Activated T-helper 1 cell treated with anti-CD3 and anti-CD28 coated beads, Interleukin-12 subunit alpha, Interleukin-12 subunit beta, Interleukin-2, Interleukin-4 antibody, amounts not matched to agents 30 ng/mL and 10 ng/mL and 1 ng/mL, durations not matched to agents 14 hours and 24 hours and 36 hours (primary cell): ENCODE measurements at regions of chr10 and their contacts with region 1.

Region 1: DNA sequence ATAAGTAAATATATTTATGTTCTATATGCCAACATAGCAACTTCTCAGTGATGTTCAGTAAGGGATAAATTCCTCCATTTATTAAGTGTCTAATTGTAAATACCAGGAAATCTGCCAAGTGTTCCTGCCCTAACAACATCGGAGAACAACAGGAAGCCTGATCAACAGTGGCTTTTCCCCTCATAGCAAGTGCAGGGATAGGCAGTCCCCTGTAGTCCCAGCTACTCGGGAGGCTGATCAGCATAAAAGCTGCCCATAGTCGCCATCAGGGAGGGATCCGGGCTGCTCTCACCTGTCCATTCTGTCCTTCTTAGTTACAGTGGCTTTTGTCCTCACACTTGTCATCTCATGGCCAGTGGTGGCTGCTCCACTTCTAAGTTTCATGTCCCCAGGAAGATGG is 141.3 kb downstream of the IDE start:
- DNase-seq: no peak
- H3K4me3 Mint-ChIP-seq: no peak overlapping the region
- H3K27ac Mint-ChIP-seq: no peak overlapping the region
- H3K4me1 Mint-ChIP-seq: no peaks in the 10 kb centered on the region
- H3K27me3 Mint-ChIP-seq: peaks cover 2% of the 10 kb centered on the region

Region 2: GRCh38 chr10:91758303-91759146 is 674.1 kb before region 1 on chr10:
- intact Hi-C with region 1: loop called (anchors 1 kb)
- DNase-seq: no peak
- H3K4me3 Mint-ChIP-seq: no peak overlapping the region
- H3K27ac Mint-ChIP-seq: no peak overlapping the region
- H3K4me1 Mint-ChIP-seq: no peaks in the 10 kb centered on the region
- H3K27me3 Mint-ChIP-seq: peaks cover 37% of the 10 kb centered on the region

Region 3: GRCh38 chr10:91901784-91902677 is 530.6 kb before region 1 on chr10:
- intact Hi-C with region 1: no loop called
- DNase-seq: no peak
- H3K4me3 Mint-ChIP-seq: peak overlapping the region; percentile 45
- H3K27ac Mint-ChIP-seq: peak overlapping the region; percentile 90
- H3K4me1 Mint-ChIP-seq: peaks cover 28% of the 10 kb centered on the region
- H3K27me3 Mint-ChIP-seq: peaks cover 4% of the 10 kb centered on the region

Region 4: DNA sequence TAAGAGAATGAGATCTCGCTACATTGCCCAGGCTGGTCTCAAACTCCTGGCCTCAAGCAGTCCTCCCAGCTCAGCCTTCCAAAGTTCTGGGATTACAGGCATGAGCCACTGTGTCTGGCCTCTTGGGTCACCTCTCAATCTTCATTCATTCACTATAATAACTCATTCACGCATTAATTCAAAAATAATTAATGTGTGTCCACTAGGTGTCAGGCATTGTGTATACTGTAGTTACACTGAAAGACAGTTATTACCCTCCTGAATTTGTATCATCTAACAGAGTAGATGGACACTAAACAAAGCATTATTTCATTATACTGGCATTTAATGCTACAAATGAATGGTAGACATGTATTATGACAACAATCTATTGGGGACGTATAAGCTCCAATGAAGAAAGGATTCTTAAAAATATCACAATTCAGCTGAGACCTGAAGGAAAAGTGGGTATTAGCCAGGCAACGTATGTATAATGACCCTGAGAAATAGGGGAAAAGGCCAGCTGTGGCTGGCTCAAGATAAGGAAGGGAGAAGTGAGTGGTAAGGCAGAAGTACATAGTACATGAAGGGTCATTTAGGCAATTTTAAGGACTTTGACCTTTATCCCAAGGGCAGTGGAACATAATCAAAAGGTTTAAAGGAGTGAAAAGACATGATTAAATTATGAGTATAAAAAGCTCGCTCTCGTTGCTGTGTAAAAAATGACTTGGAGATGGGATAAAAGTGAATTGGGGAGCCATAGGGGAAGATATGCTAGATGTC is 358.3 kb before region 1 on chr10:
- intact Hi-C with region 1: loop called (anchors 5 kb)
- DNase-seq: no peak
- H3K4me3 Mint-ChIP-seq: no peak overlapping the region
- H3K27ac Mint-ChIP-seq: no peak overlapping the region
- H3K4me1 Mint-ChIP-seq: no peaks in the 10 kb centered on the region
- H3K27me3 Mint-ChIP-seq: no peaks in the 10 kb centered on the region

Region 5: DNA sequence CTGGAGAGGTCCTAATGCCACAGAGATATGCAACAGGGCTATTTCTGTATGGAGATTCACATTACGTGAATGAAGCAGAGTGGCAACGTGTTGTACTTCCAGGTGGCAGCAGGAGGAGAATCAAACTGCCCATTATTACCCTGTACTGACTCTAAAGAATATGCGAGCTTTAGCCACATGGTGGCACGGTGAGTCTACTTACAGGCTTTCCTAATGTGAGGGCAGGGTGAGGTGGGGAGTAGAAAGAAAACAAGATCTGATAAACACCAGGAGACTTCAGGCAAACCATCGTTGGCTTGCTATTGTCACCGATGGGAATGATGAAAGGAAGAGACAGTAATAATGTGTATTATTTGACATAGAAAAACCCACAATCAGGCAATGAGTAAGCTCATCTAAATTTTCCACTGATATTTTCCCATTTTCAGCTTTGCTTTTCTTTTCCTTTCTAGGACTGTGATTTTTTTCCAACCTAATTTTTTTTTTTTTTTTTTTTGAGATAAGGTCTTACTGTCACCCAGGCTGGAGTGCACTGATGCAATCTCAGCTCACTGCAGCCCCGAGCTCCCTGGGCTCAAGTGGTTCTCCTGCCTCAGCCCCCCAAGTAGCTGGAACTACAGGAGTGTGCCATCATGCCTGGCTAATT is 344.7 kb before region 1 on chr10:
- intact Hi-C with region 1: loop called (anchors 1 kb)
- DNase-seq: peak; percentile 43
- H3K4me3 Mint-ChIP-seq: no peak overlapping the region
- H3K27ac Mint-ChIP-seq: no peak overlapping the region
- H3K4me1 Mint-ChIP-seq: peaks cover 8% of the 10 kb centered on the region
- H3K27me3 Mint-ChIP-seq: no peaks in the 10 kb centered on the region

Region 6: DNA sequence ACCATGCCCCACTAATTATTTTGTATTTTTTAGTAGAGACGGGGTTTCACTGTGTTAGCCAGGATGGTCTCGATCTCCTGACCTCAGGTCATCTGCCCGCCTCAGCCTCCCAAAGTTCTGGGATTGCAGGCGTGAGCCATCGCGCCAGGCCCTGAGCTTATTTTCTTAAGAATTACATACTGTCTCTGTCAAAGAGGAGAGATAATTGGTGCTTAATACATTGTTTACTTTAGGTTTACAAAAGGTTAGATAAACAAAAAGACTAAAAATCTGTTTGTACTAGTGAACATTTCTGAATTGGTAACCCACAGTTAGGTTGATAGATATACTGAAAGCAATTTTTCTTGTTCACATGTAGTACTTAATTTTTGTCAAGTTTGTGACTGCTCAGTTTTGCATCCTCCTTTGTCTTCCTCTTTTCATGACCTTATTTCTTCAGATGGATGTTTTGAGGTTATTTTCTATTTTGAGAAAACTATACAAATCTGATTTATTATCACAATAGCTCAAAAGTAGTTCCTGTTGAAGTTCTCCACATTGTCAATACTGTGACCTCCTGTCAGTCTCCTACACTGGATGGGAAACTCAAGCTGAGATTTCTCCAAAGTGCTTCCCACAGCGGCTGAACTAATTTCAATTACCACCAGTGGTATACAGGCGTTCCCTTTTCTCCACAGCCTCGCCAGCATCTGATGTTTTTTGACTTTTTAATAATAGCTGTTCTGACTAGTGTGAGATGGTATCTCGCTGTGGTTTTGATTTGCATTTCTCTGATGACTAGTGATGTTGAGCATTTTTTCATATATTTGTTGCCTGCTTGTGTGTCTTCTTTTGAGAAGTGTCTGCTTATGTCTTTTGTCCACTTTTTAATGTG is 279.7 kb after region 1 on chr10:
- intact Hi-C with region 1: no loop called
- DNase-seq: no peak
- H3K4me3 Mint-ChIP-seq: no peak overlapping the region
- H3K27ac Mint-ChIP-seq: no peak overlapping the region
- H3K4me1 Mint-ChIP-seq: no peaks in the 10 kb centered on the region
- H3K27me3 Mint-ChIP-seq: peaks cover 15% of the 10 kb centered on the region